ENCODE measurements at regions of chr19 and their contacts with region 1.

Region 1: DNA sequence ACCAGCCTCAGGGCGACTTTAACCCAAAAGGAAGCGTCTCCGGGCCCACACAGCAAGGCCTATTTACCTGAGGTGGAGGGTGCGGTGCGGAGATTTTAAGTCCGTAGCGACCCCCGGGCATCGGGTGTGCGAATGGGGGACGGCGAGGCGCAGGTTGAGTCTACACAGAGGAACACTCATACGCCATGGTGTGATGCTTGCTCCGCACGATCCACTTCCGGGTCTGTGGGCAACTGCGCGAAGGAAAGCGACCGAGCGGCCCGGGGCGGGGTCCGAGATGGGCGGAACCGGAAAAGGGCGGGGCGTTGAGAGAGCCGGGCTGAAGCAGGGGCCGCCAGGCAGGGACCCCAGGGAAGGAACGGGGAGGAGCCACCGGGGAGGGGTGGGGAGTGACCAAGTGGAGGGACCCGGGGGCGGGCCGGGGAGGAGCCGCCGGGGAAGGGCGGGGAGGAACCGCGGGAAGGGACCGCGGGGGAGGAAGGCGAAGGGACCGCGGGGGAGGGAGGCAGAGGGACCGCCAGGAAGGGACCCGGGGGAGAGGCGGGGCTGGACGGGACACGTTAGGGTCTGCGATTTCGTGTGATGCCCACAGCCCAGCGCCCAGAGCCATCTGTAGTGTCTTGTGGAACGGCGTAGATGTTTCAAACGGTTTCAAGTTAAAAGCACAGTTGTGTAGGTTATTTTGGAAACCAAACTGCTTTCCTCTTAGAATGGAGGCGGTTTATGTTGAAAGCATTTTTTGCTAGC is at the start of gene ZNF160:
- H3K4me3 Mint-ChIP-seq: peak within 1 kb of the TSS; percentile 82
- H3K27ac Mint-ChIP-seq: peak within 1 kb of the TSS; percentile 86
- H3K4me1 Mint-ChIP-seq: peaks cover 14% of the 10 kb centered on the region
- H3K27me3 Mint-ChIP-seq: peaks cover 4% of the 10 kb centered on the region

Region 2: GRCh38 chr19:53132141-53132991 is 29.0 kb after region 1 on chr19 and contains the start of gene ZNF415:
- intact Hi-C with region 1: loop called (anchors 2 kb)
- H3K4me3 Mint-ChIP-seq: peak within 1 kb of the TSS; percentile 56
- H3K27ac Mint-ChIP-seq: no peak within 1 kb of the TSS
- H3K4me1 Mint-ChIP-seq: peaks cover 16% of the 10 kb centered on the region
- H3K27me3 Mint-ChIP-seq: peaks cover 26% of the 10 kb centered on the region

Region 3: GRCh38 chr19:53158119-53158656 is 54.8 kb after region 1 on chr19:
- intact Hi-C with region 1: loop called (anchors 2 kb)
- H3K4me3 Mint-ChIP-seq: peak overlapping the region; percentile 80
- H3K27ac Mint-ChIP-seq: peak overlapping the region; percentile 68
- H3K4me1 Mint-ChIP-seq: peaks cover 19% of the 10 kb centered on the region
- H3K27me3 Mint-ChIP-seq: peaks cover 2% of the 10 kb centered on the region

Measured in dendritic cell treated with granulocyte-macrophage colony-stimulating factor and Interleukin-4, amounts not matched to agents 40 ng/mL and 50 ng/mL, for 4 days (primary cell).